ENCODE measurements at regions of chr3 and their contacts with region 1.

Region 1: GRCh38 chr3:112519424-112520001 is 20.2 kb upstream of the BTLA start:
- DNase-seq: no peak
- ATAC-seq: peak; percentile 88
- H3K4me3 ChIP-seq: no peak overlapping the region
- H3K27ac ChIP-seq: no peak overlapping the region
- H3K4me1 ChIP-seq: no peaks in the 10 kb centered on the region
- H3K27me3 ChIP-seq: no peaks in the 10 kb centered on the region

Region 2: DNA sequence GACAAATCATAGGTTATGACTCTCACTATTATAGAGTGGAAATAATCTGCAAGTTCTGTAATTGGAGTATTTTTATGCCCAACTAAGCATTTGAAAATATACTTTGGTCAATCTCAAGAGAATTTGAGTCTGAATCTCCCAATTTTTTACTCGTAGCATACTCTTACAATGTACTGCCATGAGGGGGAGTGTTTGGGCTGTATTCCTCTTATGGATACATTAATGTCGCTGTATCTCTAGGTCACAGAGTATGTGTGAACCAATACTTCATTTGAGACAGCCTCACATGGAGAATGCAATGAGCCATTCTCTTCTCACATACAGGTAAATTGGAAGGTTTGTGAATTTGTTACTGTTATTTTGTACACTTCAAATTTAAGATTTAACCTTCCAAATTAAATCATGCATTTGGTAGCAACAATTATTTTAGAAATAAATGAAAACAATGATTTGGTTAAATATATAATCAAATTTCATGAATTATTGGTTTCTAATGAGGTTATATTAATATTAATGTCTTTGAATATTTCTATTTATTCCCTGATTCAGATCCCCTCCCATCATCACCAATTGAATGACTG is 192.1 kb before region 1 on chr3:
- intact Hi-C with region 1: loop called (anchors 2 to 5 kb)
- DNase-seq: no peak
- ATAC-seq: peak; percentile 86
- H3K4me3 ChIP-seq: no peak overlapping the region
- H3K27ac ChIP-seq: no peak overlapping the region
- H3K4me1 ChIP-seq: no peaks in the 10 kb centered on the region
- H3K27me3 ChIP-seq: no peaks in the 10 kb centered on the region